ENCODE measurements at regions of chr15 and their contacts with region 1.

Region 1: DNA sequence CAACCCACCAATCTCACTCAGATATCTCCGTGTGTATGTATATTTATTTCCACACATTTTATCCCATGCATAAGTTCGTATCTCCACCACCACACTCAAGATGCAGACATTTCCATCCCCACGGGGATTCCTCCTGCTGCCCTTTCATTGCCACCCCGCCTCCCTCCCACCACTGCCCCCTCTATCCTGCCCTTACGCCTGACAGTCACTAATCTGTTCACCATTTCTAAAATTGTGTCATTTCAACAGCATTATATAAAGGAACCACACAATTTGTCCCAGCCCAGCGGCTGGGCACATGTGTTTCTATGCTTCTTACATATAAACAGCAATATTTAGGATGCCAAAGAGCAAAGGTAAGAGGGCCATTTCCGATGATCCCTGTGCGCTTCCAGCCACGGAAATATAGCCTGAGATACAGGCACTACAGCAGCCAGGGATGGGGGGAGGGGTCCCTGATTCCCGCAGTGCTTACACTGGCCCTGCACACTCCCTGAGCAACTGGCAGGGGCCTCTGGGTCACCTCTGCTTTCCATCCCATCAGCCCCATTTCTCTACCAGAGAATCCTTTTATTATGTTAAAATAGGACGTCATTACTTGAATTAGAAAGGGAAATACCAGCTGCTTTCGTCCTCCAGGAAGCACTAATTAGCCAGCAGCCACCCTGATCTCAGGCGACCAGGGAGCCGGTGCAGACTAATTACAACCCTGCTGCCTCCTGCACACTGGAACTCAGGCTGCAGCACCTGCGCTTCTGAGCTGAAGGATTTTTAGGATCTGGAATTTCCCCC is 372.0 kb upstream of the ATP10A start:
- DNase-seq: no peak
- H3K4me3 ChIP-seq: no peak overlapping the region
- H3K27ac ChIP-seq: no peak overlapping the region
- H3K4me1 ChIP-seq: no peaks in the 10 kb centered on the region
- H3K27me3 ChIP-seq: no peaks in the 10 kb centered on the region
- CTCF ChIP-seq: no peak

Region 2: GRCh38 chr15:26049900-26050657 is 185.1 kb before region 1 on chr15:
- intact Hi-C with region 1: loop called (anchors 10 kb)
- DNase-seq: no peak
- H3K4me3 ChIP-seq: no peak overlapping the region
- H3K27ac ChIP-seq: no peak overlapping the region
- H3K4me1 ChIP-seq: no peaks in the 10 kb centered on the region
- H3K27me3 ChIP-seq: no peaks in the 10 kb centered on the region
- CTCF ChIP-seq: no peak

Region 3: GRCh38 chr15:26160343-26160742 is 74.8 kb before region 1 on chr15:
- intact Hi-C with region 1: loop called (anchors 5 kb)
- DNase-seq: no peak
- H3K4me3 ChIP-seq: no peak overlapping the region
- H3K27ac ChIP-seq: no peak overlapping the region
- H3K4me1 ChIP-seq: no peaks in the 10 kb centered on the region
- H3K27me3 ChIP-seq: no peaks in the 10 kb centered on the region
- CTCF ChIP-seq: no peak

Measured in colonic mucosa (tissue), 4 donors.